ENCODE measurements at regions of chr2 and their contacts with region 1.

Region 1: GRCh38 chr2:98835831-98836385 is 100.1 kb downstream of the CRACDL start:
- DNase-seq: no peak
- ATAC-seq: peak in 1 of 4 donors; percentile 28
- H3K4me3 ChIP-seq: no peak overlapping the region
- H3K27ac ChIP-seq: no peak overlapping the region
- H3K4me1 ChIP-seq: peaks cover 0 to 4% (median 0%) of the 10 kb centered on the region in 4 donors
- H3K27me3 ChIP-seq: no peaks in the 10 kb centered on the region
- CTCF ChIP-seq: no peak
- POLR2A ChIP-seq: no peak

Region 2: DNA sequence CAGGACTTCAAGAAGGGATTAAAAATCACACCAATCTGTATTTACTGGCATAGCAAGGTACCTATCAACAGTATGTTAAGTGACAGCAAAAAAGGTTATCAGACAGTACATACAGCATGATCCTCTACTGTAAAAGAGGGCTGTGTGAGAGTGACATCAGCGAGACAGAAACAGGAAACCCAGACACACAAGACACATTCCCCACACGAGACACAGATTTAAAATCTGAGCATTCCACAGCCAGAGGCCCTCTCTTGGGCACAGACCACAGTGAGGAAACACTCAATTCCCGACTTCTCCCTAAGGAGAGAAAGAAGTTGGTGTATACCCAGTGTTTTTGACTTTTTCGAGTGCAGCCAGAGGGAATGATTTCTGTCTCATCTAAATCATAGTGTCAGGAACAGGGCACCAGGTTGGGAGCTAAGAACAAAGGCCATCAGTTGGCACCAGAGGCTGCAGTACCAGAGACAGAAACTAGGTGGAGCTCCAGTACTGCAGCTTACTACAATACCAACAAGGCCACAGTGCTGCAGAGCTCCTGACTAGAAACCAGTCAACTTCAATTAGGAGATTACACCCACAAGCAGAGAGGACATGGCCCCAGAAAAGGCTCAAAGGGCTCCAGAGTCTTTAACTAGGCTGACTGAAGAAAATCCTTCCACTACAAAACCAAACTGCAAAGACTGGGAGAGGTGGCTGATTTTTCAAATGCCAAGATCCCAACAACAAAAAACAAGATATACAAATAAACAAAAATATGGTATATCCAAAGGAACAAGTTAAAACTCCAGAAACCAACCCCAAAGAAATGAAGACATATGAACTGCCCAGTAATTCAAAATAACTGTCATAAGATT is 186.5 kb before region 1 on chr2:
- intact Hi-C with region 1: loop called (anchors 2 to 5 kb)
- DNase-seq: peak; percentile 60 to 81 (median 60)
- ATAC-seq: peak; percentile 100
- H3K4me3 ChIP-seq: no peak overlapping the region
- H3K27ac ChIP-seq: no peak overlapping the region
- H3K4me1 ChIP-seq: peaks cover 0 to 3% (median 0%) of the 10 kb centered on the region in 4 donors
- H3K27me3 ChIP-seq: no peaks in the 10 kb centered on the region
- CTCF ChIP-seq: peak; percentile 95 to 99 (median 98)
- POLR2A ChIP-seq: no peak

Region 3: DNA sequence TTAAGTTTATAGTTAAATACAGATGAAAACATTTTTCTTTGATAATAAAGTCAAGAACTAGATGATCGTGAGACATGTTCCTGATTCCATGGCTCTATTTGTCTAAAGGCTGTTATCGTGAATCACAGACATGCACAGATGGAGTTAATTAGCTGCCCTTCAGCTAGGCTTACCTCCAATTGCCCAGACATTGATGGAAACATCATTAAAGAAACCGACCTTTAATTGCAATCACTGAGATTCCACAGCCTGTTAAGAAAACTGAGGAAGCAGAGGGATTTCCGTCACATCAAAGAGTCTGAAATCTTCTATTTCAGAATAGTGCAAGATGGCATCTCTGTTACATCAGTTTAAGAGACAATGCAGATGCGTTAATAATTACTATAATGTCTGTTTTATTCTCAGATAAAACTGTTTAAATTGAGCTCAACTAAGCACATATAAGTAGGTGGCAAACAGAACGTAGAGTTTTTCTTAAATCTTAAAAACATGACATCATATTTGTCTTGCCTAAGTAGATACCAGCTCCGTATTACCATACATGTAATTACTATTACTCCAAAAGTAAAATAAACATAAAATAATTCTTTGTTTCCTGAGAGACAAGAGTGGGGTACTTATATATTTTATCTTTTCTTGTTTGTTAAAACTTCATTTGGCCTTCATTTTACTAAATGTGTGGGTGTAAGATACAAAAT is 124.1 kb after region 1 on chr2:
- intact Hi-C with region 1: no loop called
- DNase-seq: no peak
- ATAC-seq: no peak
- H3K4me3 ChIP-seq: no peak overlapping the region
- H3K27ac ChIP-seq: no peak overlapping the region
- H3K4me1 ChIP-seq: no peaks in the 10 kb centered on the region
- H3K27me3 ChIP-seq: no peaks in the 10 kb centered on the region
- CTCF ChIP-seq: no peak
- POLR2A ChIP-seq: no peak

Measured in right lobe of liver (tissue), 6 donors.